A673 (cell line): ENCODE measurements at regions of chr16 and their contacts with region 1.

Region 1: DNA sequence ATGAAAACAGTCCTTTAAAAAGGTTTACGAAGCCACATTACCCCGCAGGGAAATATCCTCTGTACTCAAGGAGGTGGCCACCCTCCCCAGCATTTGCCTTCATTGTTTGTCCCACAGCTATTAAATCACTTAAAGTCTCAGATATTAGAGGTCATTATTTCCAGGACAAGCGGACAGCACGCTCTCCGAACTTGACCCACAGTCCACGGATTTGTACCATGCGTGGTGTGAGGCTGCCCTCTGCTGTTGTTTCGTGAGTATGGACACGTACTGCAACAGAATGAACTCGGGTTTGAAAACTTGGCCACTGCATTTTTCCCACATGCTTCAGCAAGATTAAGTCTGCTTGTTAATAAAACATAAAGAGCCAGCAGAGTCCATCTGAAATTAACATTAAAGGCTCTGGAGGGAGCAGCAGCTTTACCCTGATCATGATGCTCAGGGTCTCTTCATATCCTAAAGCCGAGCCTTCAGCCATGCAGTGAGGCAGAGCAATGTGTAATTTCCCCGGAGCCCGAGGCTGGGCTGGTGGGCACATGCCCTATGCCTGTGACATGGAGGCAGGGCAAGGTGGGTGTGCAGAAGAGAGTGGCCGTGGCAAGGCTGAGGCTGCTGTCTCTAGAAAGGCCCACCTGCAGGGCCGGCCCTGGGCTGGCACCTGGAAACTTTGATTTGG is 19.7 kb downstream of the MEAK7 start:
- DNase-seq: peak; percentile 33
- H3K4me3 ChIP-seq: no peak overlapping the region
- H3K27ac ChIP-seq: no peak overlapping the region
- H3K4me1 ChIP-seq: no peaks in the 10 kb centered on the region
- H3K27me3 ChIP-seq: no peaks in the 10 kb centered on the region
- CTCF ChIP-seq: peak; percentile 75

Region 2: DNA sequence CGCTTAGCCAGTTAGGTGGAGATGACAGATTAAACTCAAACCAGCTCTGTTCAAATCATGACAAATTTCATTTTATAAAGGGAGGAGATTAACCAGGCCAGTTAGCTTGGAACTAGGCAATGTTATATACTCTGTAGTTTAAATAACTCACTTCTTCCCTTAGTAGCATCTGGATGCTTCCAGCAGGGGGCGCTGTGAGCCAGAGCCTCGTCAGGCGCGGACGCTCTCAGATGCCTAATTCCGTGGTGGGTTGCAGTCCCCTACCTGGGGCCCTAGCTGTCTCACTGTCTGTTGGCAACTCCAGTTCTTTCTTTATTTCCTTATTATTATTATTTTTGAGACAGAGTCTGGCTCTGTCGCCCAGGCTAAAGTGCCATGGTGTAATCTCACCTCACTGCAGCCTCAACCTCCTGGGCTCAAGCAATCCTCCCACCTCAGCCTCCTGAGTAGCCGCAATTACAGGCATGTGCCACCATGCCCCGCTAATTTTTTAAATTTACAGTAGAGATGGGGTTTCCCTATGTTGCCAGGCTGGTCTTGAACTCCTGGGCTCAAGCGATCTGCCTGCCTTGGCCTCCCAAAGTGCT is 207.4 kb before region 1 on chr16:
- CTCF ChIA-PET with region 1: no interaction called
- POLR2A ChIA-PET with region 1: no interaction called
- intact Hi-C with region 1: loop called (anchors 1 kb)
- DNase-seq: peak; percentile 68
- H3K4me3 ChIP-seq: no peak overlapping the region
- H3K27ac ChIP-seq: no peak overlapping the region
- H3K4me1 ChIP-seq: no peaks in the 10 kb centered on the region
- H3K27me3 ChIP-seq: peaks cover 4% of the 10 kb centered on the region
- CTCF ChIP-seq: peak; percentile 90

Region 3: DNA sequence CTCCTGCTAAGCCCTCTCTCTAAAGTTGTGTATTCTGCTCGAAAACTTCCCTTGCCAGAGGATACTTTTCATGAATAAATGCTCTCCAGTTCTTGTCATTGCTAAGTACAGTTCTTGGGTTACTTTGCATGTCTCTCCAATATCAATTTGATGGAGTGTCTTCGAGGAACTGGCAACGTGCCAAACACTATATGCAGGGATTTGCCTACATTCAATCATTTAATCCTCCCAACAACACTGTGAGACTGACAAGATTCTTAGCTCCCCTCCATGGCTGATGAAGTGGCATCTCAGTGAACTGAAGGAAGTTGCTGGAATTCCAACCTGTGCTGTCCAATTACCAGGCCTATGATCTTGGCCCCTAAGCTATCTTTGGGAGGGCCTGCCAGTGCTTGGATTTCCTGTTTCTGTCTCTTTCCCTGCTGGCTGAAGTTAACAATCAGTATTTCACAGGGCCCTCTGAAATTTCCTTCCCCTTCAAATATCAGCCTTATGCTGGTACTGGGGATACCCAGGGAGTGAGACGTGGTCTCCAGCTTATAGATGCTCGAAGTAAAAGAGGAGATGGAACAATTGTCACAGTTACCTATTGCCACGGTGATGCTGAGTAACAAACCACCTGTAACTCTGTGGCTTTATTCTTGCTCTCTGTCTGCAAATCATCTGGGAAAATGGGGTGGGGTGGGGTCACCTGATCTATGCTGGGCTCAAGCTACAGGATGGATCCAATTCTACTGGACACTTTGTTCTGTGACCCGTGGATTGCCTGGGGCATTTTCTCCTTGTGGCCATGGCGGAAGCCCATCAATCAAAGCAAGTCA is 315.7 kb after region 1 on chr16:
- CTCF ChIA-PET with region 1: no interaction called
- POLR2A ChIA-PET with region 1: no interaction called
- intact Hi-C with region 1: no loop called
- DNase-seq: peak; percentile 41
- H3K4me3 ChIP-seq: no peak overlapping the region
- H3K27ac ChIP-seq: no peak overlapping the region
- H3K4me1 ChIP-seq: no peaks in the 10 kb centered on the region
- H3K27me3 ChIP-seq: no peaks in the 10 kb centered on the region
- CTCF ChIP-seq: no peak